ENCODE measurements at regions of chr11 and their contacts with region 1.

Region 1: GRCh38 chr11:95705485-95706124 is 84.0 kb downstream of the FAM76B start:
- DNase-seq: no peak
- ATAC-seq: peak; percentile 98
- H3K4me3 ChIP-seq: no peak overlapping the region
- H3K27ac ChIP-seq: no peak overlapping the region
- H3K4me1 ChIP-seq: peaks cover 6% of the 10 kb centered on the region
- H3K27me3 ChIP-seq: no peaks in the 10 kb centered on the region
- CTCF ChIP-seq: peak; percentile 92 to 97 (median 93)
- EP300 ChIP-seq: no peak
- POLR2A ChIP-seq: no peak
- RAD21 ChIP-seq: peak; percentile 99

Region 2: GRCh38 chr11:95231127-95231880 is 474.3 kb before region 1 on chr11 and contains the start of gene SESN3:
- CTCF ChIA-PET with region 1: interaction called, 82 read pairs
- POLR2A ChIA-PET with region 1: interaction called, 39 read pairs
- RAD21 ChIA-PET with region 1: interaction called, 71 read pairs
- SMC1A ChIA-PET with region 1: interaction called, 44 read pairs
- in situ Hi-C with region 1: no loop called
- intact Hi-C with region 1: loop called (anchors 1 kb)
- DNase-seq: peak; percentile 93
- ATAC-seq: peak; percentile 89
- H3K4me3 ChIP-seq: peak within 1 kb of the TSS; percentile 62
- H3K27ac ChIP-seq: no peak within 1 kb of the TSS
- H3K4me1 ChIP-seq: peaks cover 8% of the 10 kb centered on the region
- H3K27me3 ChIP-seq: peaks cover 0 to 27% of the 10 kb centered on the region in 2 experiments; a peak in 2 of 4 replicates
- CTCF ChIP-seq: no peak; a peak in 1 of 6 replicates
- EP300 ChIP-seq: peak in 1 of 2 experiments; percentile 23; a peak in 1 of 4 replicates
- POLR2A ChIP-seq: peak; percentile 57; the same call in 1 of the 2 replicates
- RAD21 ChIP-seq: peak; percentile 35; the same call in 1 of the 2 replicates
- polyA plus RNA-seq, gene SESN3: 0.68 to 1.5 TPM

Region 3: GRCh38 chr11:95375886-95376285 is 329.7 kb before region 1 on chr11:
- CTCF ChIA-PET with region 1: interaction called, 3 read pairs
- POLR2A ChIA-PET with region 1: no interaction called
- RAD21 ChIA-PET with region 1: interaction called, 8 read pairs
- SMC1A ChIA-PET with region 1: interaction called, 3 read pairs
- in situ Hi-C with region 1: no loop called
- intact Hi-C with region 1: loop called (anchors 10 kb)
- DNase-seq: no peak
- ATAC-seq: no peak
- H3K4me3 ChIP-seq: no peak overlapping the region
- H3K27ac ChIP-seq: no peak overlapping the region
- H3K4me1 ChIP-seq: no peaks in the 10 kb centered on the region
- H3K27me3 ChIP-seq: peaks cover 0 to 1% of the 10 kb centered on the region in 2 experiments; a peak in 1 of 4 replicates
- CTCF ChIP-seq: no peak
- EP300 ChIP-seq: no peak
- POLR2A ChIP-seq: no peak
- RAD21 ChIP-seq: no peak

Region 4: GRCh38 chr11:95512682-95513081 is 192.9 kb before region 1 on chr11:
- CTCF ChIA-PET with region 1: interaction called, 20 read pairs
- POLR2A ChIA-PET with region 1: no interaction called
- RAD21 ChIA-PET with region 1: interaction called, 21 read pairs
- SMC1A ChIA-PET with region 1: interaction called, 8 read pairs
- in situ Hi-C with region 1: no loop called
- intact Hi-C with region 1: loop called (anchors 5 kb)
- DNase-seq: no peak
- ATAC-seq: no peak
- H3K4me3 ChIP-seq: no peak overlapping the region
- H3K27ac ChIP-seq: no peak overlapping the region
- H3K4me1 ChIP-seq: no peaks in the 10 kb centered on the region
- H3K27me3 ChIP-seq: peaks cover 0 to 2% of the 10 kb centered on the region in 2 experiments; a peak in 3 of 4 replicates
- CTCF ChIP-seq: no peak
- EP300 ChIP-seq: no peak
- POLR2A ChIP-seq: no peak
- RAD21 ChIP-seq: no peak

Region 5: GRCh38 chr11:95584589-95584988 is 121.0 kb before region 1 on chr11:
- CTCF ChIA-PET with region 1: interaction called, 21 read pairs
- POLR2A ChIA-PET with region 1: interaction called, 3 read pairs
- RAD21 ChIA-PET with region 1: interaction called, 7 read pairs
- SMC1A ChIA-PET with region 1: interaction called, 48 read pairs
- in situ Hi-C with region 1: no loop called
- intact Hi-C with region 1: no loop called
- DNase-seq: no peak
- ATAC-seq: peak; percentile 71
- H3K4me3 ChIP-seq: no peak overlapping the region
- H3K27ac ChIP-seq: no peak overlapping the region
- H3K4me1 ChIP-seq: no peaks in the 10 kb centered on the region
- H3K27me3 ChIP-seq: no peaks in the 10 kb centered on the region
- CTCF ChIP-seq: peak; percentile 9 to 13 (median 12); a peak in 3 of 6 replicates
- EP300 ChIP-seq: no peak
- POLR2A ChIP-seq: no peak
- RAD21 ChIP-seq: peak; percentile 37; the same call in 1 of the 2 replicates

Region 6: GRCh38 chr11:95688580-95689189 is 16.9 kb before region 1 on chr11:
- CTCF ChIA-PET with region 1: interaction called, 11 read pairs
- POLR2A ChIA-PET with region 1: interaction called, 5 read pairs
- RAD21 ChIA-PET with region 1: interaction called, 20 read pairs
- SMC1A ChIA-PET with region 1: interaction called, 110 read pairs
- in situ Hi-C with region 1: no loop called
- intact Hi-C with region 1: no loop called
- DNase-seq: no peak
- ATAC-seq: peak; percentile 57
- H3K4me3 ChIP-seq: no peak overlapping the region
- H3K27ac ChIP-seq: no peak overlapping the region
- H3K4me1 ChIP-seq: no peaks in the 10 kb centered on the region
- H3K27me3 ChIP-seq: no peaks in the 10 kb centered on the region; a peak in 1 of 4 replicates
- CTCF ChIP-seq: no peak
- EP300 ChIP-seq: no peak
- POLR2A ChIP-seq: no peak
- RAD21 ChIP-seq: no peak

Region 7: GRCh38 chr11:95805869-95806268 is 100.3 kb after region 1 on chr11:
- CTCF ChIA-PET with region 1: no interaction called
- POLR2A ChIA-PET with region 1: no interaction called
- RAD21 ChIA-PET with region 1: no interaction called
- SMC1A ChIA-PET with region 1: no interaction called
- in situ Hi-C with region 1: no loop called
- intact Hi-C with region 1: no loop called
- DNase-seq: no peak
- ATAC-seq: no peak
- H3K4me3 ChIP-seq: no peak overlapping the region
- H3K27ac ChIP-seq: no peak overlapping the region
- H3K4me1 ChIP-seq: no peaks in the 10 kb centered on the region
- H3K27me3 ChIP-seq: no peaks in the 10 kb centered on the region
- CTCF ChIP-seq: no peak
- EP300 ChIP-seq: no peak
- POLR2A ChIP-seq: no peak
- RAD21 ChIP-seq: no peak